Right ventricle myocardium inferior (tissue), 1 donor: ENCODE measurements at regions of chr1 and their contacts with region 1.

Region 1: DNA sequence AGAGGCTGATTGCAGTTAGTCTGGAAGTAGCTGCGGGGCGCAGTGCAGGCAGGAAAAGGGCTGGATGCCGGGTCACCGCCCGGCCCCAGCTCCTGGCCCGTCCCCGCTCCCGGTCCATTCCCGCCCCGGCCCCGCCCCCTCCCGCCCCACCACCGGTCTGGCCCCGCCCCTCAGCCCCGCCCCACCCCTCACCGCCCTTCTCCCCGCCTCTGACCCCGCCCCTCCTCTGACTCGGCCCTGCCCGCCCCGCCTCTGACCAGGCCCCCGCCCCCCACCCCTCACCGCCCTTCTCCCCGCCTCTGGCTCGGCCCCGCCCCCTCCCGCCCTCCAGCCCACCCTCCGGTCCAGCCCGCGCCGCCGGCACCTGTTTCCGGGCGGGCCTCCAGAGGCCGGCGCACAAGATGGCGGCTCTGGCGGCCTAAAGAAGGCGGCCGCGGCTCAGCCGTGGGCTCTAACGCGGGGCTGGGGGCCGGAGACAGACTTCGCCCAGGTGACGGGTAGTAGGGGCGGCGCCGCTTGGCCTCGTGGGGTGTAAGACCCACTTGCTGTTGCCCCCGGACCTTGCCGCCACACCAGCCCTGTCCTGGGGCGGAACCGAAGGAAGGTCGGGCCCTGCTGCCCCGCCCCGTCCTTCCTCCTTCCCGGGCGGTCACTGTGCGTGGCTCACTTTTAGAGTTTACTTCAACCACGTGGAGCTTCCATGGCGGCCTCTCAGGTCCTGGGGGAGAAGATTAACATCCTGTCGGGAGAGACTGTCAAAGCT is at the start of gene UBIAD1:
- DNase-seq: peak; percentile 93
- ATAC-seq: peak; percentile 94
- total RNA-seq, gene UBIAD1: 11.2 TPM

Region 2: GRCh38 chr1:11262171-11263049 is 10.6 kb before region 1 on chr1 and contains the start of gene MTOR:
- intact Hi-C with region 1: loop called (anchors 1 kb)
- DNase-seq: peak; percentile 99
- ATAC-seq: peak; percentile 100
- total RNA-seq, gene MTOR: 28.4 TPM